H1 (cell line): ENCODE measurements at regions of chr10 and their contacts with region 1.

Region 1: DNA sequence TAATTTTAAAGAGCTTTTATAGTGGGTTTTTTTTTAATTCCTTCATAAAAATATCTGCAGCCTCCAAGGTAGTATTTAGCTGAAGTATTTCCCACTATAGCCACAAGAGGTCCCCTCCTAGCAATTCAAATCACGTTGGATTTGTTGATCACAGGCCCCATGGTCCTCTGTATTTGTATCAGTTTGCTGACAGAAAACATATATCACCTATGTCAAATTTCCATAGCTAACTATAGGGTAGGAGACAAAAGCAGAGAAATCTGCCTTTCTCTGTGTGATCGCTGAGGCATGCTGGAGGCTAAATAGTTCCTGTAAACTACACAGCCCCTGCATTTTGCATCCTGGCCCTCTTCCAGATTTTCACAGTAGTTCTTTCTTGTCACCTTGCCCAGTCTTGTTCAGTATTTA is 1.7 kb upstream of the CTNNA3 start:
- DNase-seq: no peak
- H3K4me3 ChIP-seq: no peak overlapping the region
- H3K27ac ChIP-seq: no peak overlapping the region
- H3K4me1 ChIP-seq: no peaks in the 10 kb centered on the region
- H3K27me3 ChIP-seq: no peaks in the 10 kb centered on the region
- CTCF ChIP-seq: peak in 2 of 3 experiments; percentile 57 to 59; a peak in 3 of 4 replicates
- EP300 ChIP-seq: no peak
- POLR2A ChIP-seq: no peak
- RAD21 ChIP-seq: peak; percentile 64 to 67

Region 2: DNA sequence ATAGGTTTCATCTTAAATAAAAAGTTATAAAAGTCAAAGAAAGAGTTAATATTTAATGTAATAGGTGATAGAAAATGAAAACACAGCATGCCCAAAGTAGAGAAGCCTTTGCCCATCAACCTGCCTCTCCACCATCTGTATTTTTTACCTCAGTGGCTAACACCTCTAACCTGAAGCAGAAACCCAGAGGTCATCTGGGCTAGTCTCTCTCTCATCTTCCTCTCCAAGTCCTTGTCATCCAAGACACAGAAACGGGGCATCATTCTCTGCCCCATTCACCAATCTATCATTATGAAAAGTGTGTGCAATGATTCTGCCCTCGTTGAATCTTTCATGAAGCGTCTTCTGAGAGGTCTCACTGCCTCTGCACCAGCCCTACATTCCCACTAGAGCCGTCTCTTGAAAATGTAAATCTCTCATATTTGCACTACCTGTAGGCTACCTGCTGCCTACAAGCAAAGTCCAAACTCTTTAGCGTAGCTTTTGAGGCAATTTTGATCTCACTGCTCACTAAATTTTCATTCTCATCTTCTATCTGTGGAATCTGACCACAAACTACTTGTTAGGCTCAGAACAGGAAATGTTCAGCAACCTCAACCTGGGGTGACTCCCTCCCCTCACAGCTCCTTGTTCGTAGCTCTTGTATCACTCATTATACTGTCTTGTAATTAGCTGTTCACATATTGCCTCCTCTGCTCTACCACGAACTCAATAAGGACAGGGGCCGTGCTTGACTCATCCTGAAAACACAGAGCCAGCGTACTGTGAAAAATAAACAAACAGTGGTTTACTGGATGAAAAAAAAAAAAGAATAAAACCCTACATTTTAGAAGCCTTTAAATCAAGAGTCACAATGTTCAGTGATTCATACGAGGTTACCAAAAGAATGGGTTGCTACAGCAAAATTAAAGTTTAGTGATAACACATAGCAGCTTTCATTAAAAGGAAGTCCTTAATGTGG is 84.9 kb before region 1 on chr10:
- CTCF ChIA-PET with region 1: no interaction called
- POLR2A ChIA-PET with region 1: no interaction called
- DNase-seq: no peak
- H3K4me3 ChIP-seq: no peak overlapping the region
- H3K27ac ChIP-seq: no peak overlapping the region
- H3K4me1 ChIP-seq: 0 out of 7 replicates have a peak, but pooled peaks cover 0 to 3% (median 0%) of the 10 kb centered on the region in 4 experiments
- H3K27me3 ChIP-seq: no peaks in the 10 kb centered on the region
- CTCF ChIP-seq: no peak
- EP300 ChIP-seq: no peak
- POLR2A ChIP-seq: no peak
- RAD21 ChIP-seq: no peak

Region 3: DNA sequence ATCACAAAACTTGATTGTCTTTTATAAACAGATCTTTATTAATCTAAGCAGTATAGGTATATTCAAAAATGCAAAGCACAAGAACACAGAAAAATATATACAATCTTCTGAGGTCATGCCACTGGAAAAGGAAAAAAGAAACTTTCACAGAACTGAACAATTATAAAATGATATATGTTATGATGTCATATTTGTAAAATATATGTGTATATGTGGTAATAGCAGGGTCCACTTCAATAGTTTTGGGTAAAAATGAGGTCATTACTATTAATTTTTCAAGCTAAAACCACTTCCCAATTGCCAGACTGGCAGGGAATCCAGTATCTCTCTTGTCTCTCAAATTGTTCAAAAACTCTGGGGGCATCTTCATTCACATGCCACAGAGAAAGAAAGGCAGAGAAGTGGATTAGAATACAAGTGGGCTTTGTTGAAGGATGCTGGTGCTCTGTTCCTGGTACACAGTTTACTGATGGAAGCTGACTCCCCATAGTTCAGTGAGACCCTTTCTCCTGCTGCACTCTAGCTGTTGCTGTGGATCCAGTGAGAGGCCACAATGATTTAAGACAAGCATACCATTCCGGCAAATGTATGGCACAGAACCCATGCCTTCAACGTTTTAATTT is 21.4 kb before region 1 on chr10:
- CTCF ChIA-PET with region 1: interaction called, 13 read pairs
- POLR2A ChIA-PET with region 1: no interaction called
- DNase-seq: no peak
- H3K4me3 ChIP-seq: no peak overlapping the region
- H3K27ac ChIP-seq: no peak overlapping the region
- H3K4me1 ChIP-seq: no peaks in the 10 kb centered on the region; a peak in 1 of 7 replicates
- H3K27me3 ChIP-seq: no peaks in the 10 kb centered on the region
- CTCF ChIP-seq: no peak
- EP300 ChIP-seq: no peak
- POLR2A ChIP-seq: no peak
- RAD21 ChIP-seq: no peak

Region 4: DNA sequence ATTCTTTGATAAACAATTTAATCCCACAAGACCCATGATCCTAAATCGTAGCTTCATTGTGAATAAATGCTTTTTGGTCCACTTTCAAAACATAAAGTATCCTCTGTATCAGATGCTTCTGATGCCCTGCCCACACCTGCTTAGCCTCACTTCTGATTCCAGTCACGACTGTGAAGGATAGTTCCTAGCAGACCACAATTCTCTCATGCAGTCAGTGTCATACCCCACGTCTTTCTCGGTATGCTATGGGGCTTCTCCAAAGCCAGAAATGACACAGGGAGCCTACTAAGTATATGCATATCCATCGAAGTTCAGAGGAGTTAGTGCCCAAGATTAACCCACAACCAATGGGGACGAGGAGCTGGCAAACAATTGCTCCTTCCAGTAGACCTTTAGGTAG is 25.9 kb after region 1 on chr10:
- CTCF ChIA-PET with region 1: interaction called, 15 read pairs
- POLR2A ChIA-PET with region 1: no interaction called
- DNase-seq: no peak
- H3K4me3 ChIP-seq: no peak overlapping the region
- H3K27ac ChIP-seq: no peak overlapping the region
- H3K4me1 ChIP-seq: no peaks in the 10 kb centered on the region
- H3K27me3 ChIP-seq: no peaks in the 10 kb centered on the region
- CTCF ChIP-seq: no peak
- EP300 ChIP-seq: no peak
- POLR2A ChIP-seq: no peak
- RAD21 ChIP-seq: no peak

Region 5: DNA sequence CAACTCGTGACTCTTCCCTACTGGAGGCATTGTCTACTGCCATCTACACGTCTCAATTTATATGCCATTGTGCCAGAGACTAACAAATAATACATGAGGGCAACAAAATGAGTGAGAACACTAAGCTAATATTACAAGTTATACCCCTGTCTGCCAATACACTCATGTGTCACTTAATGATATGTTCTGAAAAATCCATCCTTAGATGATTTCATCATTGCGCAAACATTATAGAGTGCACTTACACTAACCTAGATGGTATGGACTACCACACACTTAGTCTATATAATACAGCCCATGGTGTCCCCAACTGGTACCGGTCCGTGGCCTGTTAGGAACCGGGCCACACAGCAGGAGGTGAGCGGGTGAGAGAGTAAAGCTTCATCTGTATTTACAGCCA is 62.5 kb after region 1 on chr10:
- CTCF ChIA-PET with region 1: interaction called, 11 read pairs
- POLR2A ChIA-PET with region 1: no interaction called
- DNase-seq: no peak
- H3K4me3 ChIP-seq: no peak overlapping the region
- H3K27ac ChIP-seq: no peak overlapping the region
- H3K4me1 ChIP-seq: peaks cover 0 to 2% (median 2%) of the 10 kb centered on the region in 4 experiments; a peak in 1 of 7 replicates
- H3K27me3 ChIP-seq: no peaks in the 10 kb centered on the region; a peak in 1 of 7 replicates
- CTCF ChIP-seq: no peak
- EP300 ChIP-seq: no peak
- POLR2A ChIP-seq: no peak
- RAD21 ChIP-seq: no peak

Region 6: DNA sequence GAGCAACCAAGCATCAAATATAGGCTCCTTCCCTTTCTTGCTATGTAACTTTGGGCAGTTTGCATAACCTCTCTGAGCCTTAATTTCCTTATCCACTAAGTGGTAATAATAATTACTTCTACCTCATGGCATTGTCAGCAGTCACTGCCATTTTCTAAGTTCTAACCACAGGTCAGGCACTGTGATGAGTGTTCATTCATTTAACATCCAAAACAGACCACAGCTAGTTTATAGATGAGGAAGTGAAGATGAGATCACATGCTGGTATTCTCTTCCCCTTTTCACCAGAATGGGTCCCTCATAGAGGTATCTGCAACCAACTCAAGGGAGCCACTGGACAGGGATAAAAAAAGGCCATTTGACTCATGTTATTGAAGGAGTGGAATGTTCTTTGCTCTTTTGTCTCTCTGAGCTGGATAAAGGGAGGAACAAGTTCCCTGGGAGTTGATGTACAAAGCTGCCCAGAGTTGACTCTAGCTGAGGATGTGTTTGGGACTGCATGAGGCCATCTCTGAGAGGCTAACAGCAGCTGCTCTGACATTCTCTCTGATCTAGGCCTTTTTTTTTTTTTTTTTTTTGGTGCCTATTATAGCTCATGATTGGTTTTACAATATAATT is 75.3 kb after region 1 on chr10:
- CTCF ChIA-PET with region 1: interaction called, 82 read pairs
- POLR2A ChIA-PET with region 1: no interaction called
- DNase-seq: no peak
- H3K4me3 ChIP-seq: no peak overlapping the region
- H3K27ac ChIP-seq: no peak overlapping the region
- H3K4me1 ChIP-seq: no peaks in the 10 kb centered on the region
- H3K27me3 ChIP-seq: no peaks in the 10 kb centered on the region
- CTCF ChIP-seq: no peak
- EP300 ChIP-seq: no peak
- POLR2A ChIP-seq: no peak
- RAD21 ChIP-seq: no peak

Region 7: DNA sequence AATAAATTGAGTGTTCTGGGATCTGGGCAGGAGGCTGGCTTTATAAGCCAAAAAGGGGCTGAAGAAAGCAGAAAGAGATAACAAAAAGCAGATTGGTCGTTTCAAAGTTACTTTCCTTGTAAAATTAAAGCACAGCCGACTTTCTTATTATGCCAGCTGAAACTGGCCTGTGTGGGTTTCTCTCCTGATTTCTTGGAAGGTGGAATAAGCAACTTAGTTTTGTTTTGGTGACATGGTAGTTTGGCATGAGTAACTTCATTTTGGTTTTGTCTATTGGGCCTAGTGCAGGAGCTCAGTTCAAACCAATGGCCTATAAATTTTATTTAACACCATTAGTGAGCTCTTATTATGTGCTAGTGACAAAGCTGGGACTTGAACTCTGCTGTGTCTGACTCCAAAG is 153.5 kb after region 1 on chr10:
- CTCF ChIA-PET with region 1: no interaction called
- POLR2A ChIA-PET with region 1: no interaction called
- DNase-seq: no peak
- H3K4me3 ChIP-seq: no peak overlapping the region
- H3K27ac ChIP-seq: no peak overlapping the region
- H3K4me1 ChIP-seq: no peaks in the 10 kb centered on the region
- H3K27me3 ChIP-seq: no peaks in the 10 kb centered on the region
- CTCF ChIP-seq: no peak
- EP300 ChIP-seq: no peak
- POLR2A ChIP-seq: no peak
- RAD21 ChIP-seq: no peak